ENCODE measurements at regions of chr21 and their contacts with region 1.

Region 1: GRCh38 chr21:34510148-34511142 is 1.6 kb downstream of the KCNE1 start:
- DNase-seq: no peak
- ATAC-seq: peak; percentile 99
- H3K4me3 ChIP-seq: no peak overlapping the region
- H3K27ac ChIP-seq: no peak overlapping the region
- H3K4me1 ChIP-seq: no peaks in the 10 kb centered on the region
- H3K27me3 ChIP-seq: no peaks in the 10 kb centered on the region
- CTCF ChIP-seq: peak; percentile 81 to 86 (median 86)
- EP300 ChIP-seq: no peak
- POLR2A ChIP-seq: no peak
- RAD21 ChIP-seq: peak; percentile 98

Region 2: DNA sequence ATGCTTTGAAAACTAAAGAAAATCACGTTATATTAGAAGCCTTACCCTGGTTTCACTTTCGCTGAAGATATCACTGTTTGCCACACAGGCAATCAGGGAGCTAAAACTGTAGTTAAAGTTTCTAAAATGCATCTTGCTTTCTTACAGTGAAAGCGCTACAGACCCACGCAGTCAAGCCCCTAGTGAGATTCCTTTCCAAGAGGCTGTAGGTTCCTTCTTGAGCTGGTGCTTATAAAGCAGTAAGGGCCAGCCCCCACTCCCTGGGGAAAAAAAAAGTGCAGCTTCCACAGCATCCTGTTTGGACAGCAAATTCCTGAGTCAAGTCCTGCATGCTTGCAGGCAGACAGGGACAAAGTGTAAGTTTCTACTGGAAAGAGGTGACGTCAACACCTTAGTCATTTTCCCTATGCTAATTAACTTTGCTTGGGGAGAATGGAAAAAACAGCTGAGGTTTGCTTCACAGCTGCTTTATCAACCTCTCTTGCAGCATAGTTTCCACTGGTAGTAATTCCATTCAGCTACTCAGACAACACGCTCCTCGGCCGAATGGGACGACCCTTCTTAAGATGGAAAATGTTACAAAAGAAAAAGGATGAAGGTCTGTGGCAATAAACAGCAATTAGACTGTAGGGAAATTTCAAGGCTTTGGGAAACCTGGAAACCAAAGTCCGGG is 16.3 kb after region 1 on chr21:
- CTCF ChIA-PET with region 1: interaction called, 10 read pairs
- POLR2A ChIA-PET with region 1: no interaction called
- RAD21 ChIA-PET with region 1: interaction called, 7 read pairs
- SMC1A ChIA-PET with region 1: interaction called, 4 read pairs
- in situ Hi-C with region 1: no loop called
- intact Hi-C with region 1: no loop called
- DNase-seq: no peak
- ATAC-seq: peak; percentile 89
- H3K4me3 ChIP-seq: peak overlapping the region; percentile 57
- H3K27ac ChIP-seq: peak overlapping the region; percentile 78
- H3K4me1 ChIP-seq: peaks cover 14% of the 10 kb centered on the region
- H3K27me3 ChIP-seq: no peaks in the 10 kb centered on the region
- CTCF ChIP-seq: no peak
- EP300 ChIP-seq: no peak
- POLR2A ChIP-seq: no peak
- RAD21 ChIP-seq: no peak

Region 3: DNA sequence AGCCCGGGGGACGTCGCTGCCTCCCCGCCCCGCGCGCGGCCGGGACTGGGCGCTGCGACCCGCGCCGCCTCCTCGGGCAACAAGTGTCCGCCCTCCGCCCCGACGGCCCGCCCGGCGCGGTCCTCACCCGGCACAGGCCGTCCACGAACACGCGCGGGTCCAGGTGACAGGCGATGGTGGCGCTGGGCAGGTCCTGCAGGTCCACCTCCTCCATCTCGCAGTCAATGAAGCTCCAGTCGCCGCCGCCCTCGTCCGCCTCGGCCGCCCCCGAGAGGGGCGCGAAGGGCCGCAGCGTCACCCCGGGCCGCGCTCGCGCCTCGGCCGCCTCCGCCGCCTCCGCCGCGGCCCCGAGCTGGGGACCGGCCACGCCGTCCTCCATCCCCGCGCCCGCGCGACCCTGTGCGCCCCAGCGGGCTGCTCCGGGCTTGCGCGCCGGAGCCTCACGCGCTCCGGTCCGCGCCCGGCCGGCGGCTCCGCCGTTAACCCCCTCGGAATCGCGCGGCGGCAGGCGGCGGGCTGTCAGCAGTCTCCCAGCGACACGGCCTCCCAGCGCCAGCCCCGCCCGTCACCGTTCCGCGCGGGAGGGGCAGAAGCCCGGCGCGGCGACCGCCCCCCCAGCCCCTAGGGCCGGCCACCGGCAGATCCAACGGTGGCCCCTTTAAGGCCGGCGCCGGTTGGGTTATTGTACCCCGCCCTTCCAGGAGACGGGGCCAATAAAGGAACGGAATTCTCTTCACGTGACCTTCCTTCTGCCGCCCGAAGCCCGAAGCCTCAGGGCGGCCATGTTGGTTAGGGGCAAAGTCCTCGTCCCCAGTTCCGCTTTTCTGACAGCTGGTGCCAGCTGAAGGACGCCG is 104.4 kb after region 1 on chr21 and contains the start of gene RCAN1:
- CTCF ChIA-PET with region 1: interaction called, 20 read pairs
- POLR2A ChIA-PET with region 1: no interaction called
- RAD21 ChIA-PET with region 1: no interaction called
- SMC1A ChIA-PET with region 1: interaction called, 4 read pairs
- in situ Hi-C with region 1: no loop called
- intact Hi-C with region 1: no loop called
- DNase-seq: peak; percentile 75
- ATAC-seq: peak; percentile 98
- H3K4me3 ChIP-seq: peak within 1 kb of the TSS; percentile 81
- H3K27ac ChIP-seq: no peak within 1 kb of the TSS
- H3K4me1 ChIP-seq: peaks cover 6% of the 10 kb centered on the region
- H3K27me3 ChIP-seq: no peaks in the 10 kb centered on the region
- CTCF ChIP-seq: no peak
- EP300 ChIP-seq: no peak
- POLR2A ChIP-seq: 0 out of 2 replicates have a peak, but pooled peaks have one; percentile 1
- RAD21 ChIP-seq: no peak
- polyA plus RNA-seq, gene RCAN1: 5.1 to 8.8 TPM

Region 4: DNA sequence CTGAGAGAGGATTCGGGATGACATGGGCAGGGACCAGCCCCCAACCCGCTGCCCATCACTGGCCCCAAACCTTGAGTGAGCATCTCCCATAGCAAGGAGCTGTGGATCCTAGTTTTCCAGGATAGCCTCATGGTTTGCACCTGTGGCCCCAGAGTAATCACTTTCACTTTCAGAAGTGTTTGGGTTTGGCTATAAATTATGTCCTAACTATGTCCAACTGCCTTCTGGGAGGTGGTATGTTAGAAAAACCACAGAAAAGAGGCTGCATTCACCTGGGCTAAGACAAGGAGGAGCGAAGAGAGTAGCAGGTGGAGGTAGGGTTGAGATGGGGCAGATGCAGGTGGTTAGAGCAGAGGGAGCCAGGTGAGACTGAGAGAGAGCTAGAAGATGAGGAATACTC is 139.0 kb after region 1 on chr21:
- CTCF ChIA-PET with region 1: no interaction called
- POLR2A ChIA-PET with region 1: no interaction called
- RAD21 ChIA-PET with region 1: no interaction called
- SMC1A ChIA-PET with region 1: no interaction called
- in situ Hi-C with region 1: no loop called
- intact Hi-C with region 1: no loop called
- DNase-seq: no peak
- ATAC-seq: no peak
- H3K4me3 ChIP-seq: no peak overlapping the region
- H3K27ac ChIP-seq: no peak overlapping the region
- H3K4me1 ChIP-seq: no peaks in the 10 kb centered on the region; the same call in 1 of the 2 replicates
- H3K27me3 ChIP-seq: no peaks in the 10 kb centered on the region
- CTCF ChIP-seq: no peak
- EP300 ChIP-seq: no peak
- POLR2A ChIP-seq: no peak
- RAD21 ChIP-seq: no peak